Sigmoid colon (tissue), 7 donors: ENCODE measurements at regions of chr19 and their contacts with region 1.

Region 1: GRCh38 chr19:29467824-29468401 is 57.9 kb upstream of the VSTM2B start:
- DNase-seq: no peak
- H3K4me3 ChIP-seq: no peak overlapping the region
- H3K27ac ChIP-seq: no peak overlapping the region
- H3K4me1 ChIP-seq: no peaks in the 10 kb centered on the region
- H3K27me3 ChIP-seq: no peaks in the 10 kb centered on the region
- CTCF ChIP-seq: peak in 1 of 4 experiments; percentile 20
- EP300 ChIP-seq: no peak
- POLR2A ChIP-seq: no peak

Region 2: DNA sequence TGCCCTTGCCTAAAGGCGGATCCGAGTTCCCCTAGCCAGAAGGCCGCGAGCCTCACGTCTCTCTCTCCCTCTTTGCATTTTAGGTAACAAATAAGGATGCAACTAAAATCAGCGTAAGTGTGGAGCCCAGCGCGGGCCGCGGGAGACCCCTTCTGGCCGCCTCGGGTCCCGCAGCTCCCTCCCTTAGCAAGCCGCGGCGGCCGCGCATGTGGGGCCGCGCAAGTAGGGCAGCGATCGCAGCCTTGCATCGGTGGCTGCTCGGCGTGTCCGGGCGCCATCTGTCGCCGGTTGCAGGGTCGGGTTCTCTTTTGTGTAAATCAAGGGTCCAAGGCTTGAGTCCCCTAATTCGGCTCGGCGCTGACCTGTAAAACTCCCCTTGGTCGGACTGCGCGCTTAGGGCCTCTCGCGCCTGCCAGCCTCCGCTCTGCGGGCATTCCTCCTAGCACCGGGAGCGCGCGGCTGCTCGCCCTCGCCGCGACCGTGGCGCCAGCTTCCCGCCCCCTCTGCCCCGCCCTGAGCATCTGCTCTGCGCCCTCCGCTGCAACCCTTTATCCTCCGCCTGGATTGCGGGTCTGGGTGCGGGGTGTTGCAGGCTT is 60.5 kb after region 1 on chr19:
- intact Hi-C with region 1: loop called (anchors 5 kb)
- DNase-seq: peak; percentile 66
- H3K4me3 ChIP-seq: peak overlapping the region in 3 of 4 donors; percentile 13 to 39 (median 37)
- H3K27ac ChIP-seq: no peak overlapping the region
- H3K4me1 ChIP-seq: peaks cover 0 to 60% (median 54%) of the 10 kb centered on the region in 4 donors
- H3K27me3 ChIP-seq: peaks cover 49 to 100% (median 93%) of the 10 kb centered on the region in 3 donors
- CTCF ChIP-seq: peak; percentile 31 to 81 (median 60)
- EP300 ChIP-seq: no peak
- POLR2A ChIP-seq: no peak